ENCODE measurements at regions of chr13 and their contacts with region 1.

Region 1: GRCh38 chr13:27533155-27533643 is 82.8 kb upstream of the MTIF3 start:
- DNase-seq: peak; percentile 52 to 80 (median 64)
- ATAC-seq: peak; percentile 100
- H3K4me3 ChIP-seq: no peak overlapping the region
- H3K27ac ChIP-seq: no peak overlapping the region
- H3K4me1 ChIP-seq: peaks cover 0 to 10% of the 10 kb centered on the region in 2 experiments; a peak in 4 of 5 replicates
- H3K27me3 ChIP-seq: peaks cover 2 to 14% of the 10 kb centered on the region in 2 experiments; a peak in 4 of 5 replicates
- CTCF ChIP-seq: peak; percentile 90 to 99 (median 90)
- EP300 ChIP-seq: no peak
- POLR2A ChIP-seq: no peak
- RAD21 ChIP-seq: peak; percentile 78 to 85

Region 2: DNA sequence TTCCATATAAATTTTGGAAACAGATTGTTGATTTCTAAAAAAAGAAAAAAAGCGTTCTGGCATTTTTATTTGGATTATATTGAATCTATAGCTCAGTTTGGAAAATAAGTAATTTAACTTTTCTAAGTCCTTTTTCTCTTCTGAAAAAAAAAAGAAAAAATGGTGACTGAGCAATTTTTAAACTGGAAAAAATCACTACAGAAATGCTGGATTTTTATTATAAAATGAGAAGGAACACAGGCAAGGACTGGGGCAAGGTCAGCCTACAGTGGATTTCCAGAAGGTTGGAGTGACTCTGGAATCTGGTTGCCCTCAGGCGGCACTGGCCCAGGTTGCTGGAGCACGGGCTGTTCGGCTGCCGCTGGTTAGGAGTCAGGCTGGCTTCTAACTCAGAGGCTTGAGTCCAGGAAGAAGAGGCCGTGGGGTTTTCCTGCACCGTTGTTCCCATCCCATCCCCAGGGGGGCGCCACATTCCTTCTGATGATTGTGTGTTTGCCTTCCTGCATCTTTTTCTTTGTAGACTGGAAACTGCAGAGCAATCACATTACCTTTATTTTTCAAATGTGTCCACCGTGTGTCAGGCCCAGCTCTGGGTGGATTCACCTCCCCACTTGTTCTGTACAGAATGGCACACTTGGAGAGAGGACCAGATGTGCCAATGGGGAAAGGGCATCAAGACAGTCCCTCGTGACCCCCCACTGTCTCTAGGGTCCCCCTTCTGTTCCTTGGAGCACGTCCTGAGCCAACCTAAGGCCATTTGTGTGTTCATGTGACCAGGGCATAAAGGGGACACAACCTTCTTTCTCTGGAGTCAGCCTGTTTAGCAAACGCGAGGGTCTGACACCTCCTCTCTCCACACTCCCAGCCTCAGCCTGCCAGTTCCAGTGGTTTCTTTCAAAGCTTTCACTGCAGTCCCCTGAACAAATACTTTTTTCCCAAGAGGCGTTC is 153.2 kb before region 1 on chr13:
- CTCF ChIA-PET with region 1: no interaction called
- POLR2A ChIA-PET with region 1: no interaction called
- in situ Hi-C with region 1: no loop called
- intact Hi-C with region 1: loop called (anchors 5 kb)
- DNase-seq: peak; percentile 57 to 66 (median 62)
- ATAC-seq: peak; percentile 82
- H3K4me3 ChIP-seq: no peak overlapping the region
- H3K27ac ChIP-seq: no peak overlapping the region
- H3K4me1 ChIP-seq: no peaks in the 10 kb centered on the region; a peak in 1 of 5 replicates
- H3K27me3 ChIP-seq: peaks cover 0 to 8% of the 10 kb centered on the region in 2 experiments; a peak in 2 of 5 replicates
- CTCF ChIP-seq: peak; percentile 58 to 75 (median 69)
- EP300 ChIP-seq: no peak
- POLR2A ChIP-seq: no peak
- RAD21 ChIP-seq: peak; percentile 36 to 64

Region 3: DNA sequence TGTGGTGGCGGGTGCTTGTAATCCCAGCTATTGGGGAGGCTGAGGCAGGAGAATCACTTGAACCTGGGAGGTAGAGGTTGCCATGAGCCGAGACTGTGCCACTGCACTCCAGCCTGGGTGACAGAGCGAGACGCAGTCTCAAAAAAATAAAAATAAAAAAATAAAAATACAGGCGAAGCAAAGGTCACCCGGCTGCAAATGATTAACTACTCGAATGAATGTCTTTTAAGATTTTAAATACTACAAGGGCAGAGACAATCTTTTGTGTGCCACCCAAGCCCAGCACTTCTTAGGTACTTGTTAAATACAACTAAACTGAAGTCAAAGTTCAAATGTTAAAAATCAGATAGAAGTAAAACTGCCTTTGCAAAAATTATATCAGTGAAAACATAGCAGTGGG is 80.4 kb after region 1 on chr13:
- CTCF ChIA-PET with region 1: no interaction called
- POLR2A ChIA-PET with region 1: no interaction called
- in situ Hi-C with region 1: no loop called
- intact Hi-C with region 1: no loop called
- DNase-seq: no peak
- ATAC-seq: no peak
- H3K4me3 ChIP-seq: no peak overlapping the region
- H3K27ac ChIP-seq: no peak overlapping the region
- H3K4me1 ChIP-seq: no peaks in the 10 kb centered on the region
- H3K27me3 ChIP-seq: no peaks in the 10 kb centered on the region
- CTCF ChIP-seq: no peak
- EP300 ChIP-seq: no peak
- POLR2A ChIP-seq: no peak
- RAD21 ChIP-seq: no peak